ENCODE measurements at regions of chr1 and their contacts with region 1.

Region 1: GRCh38 chr1:28792644-28793121 is 19.3 kb upstream of the OPRD1 start:
- DNase-seq: no peak
- CTCF ChIP-seq: no peak

Region 2: GRCh38 chr1:28865997-28866650 is 73.4 kb after region 1 on chr1:
- in situ Hi-C with region 1: loop called (anchors 5 kb)
- DNase-seq: no peak
- CTCF ChIP-seq: no peak

Measured in GM13976 (cell line).